SK-N-SH (cell line): ENCODE measurements at regions of chr11 and their contacts with region 1.

Region 1: GRCh38 chr11:67082035-67082791 is 25.6 kb downstream of the RHOD start:
- DNase-seq: peak; percentile 55
- H3K4me3 ChIP-seq: no peak overlapping the region
- H3K27ac ChIP-seq: no peak overlapping the region
- H3K4me1 ChIP-seq: no peaks in the 10 kb centered on the region
- H3K27me3 ChIP-seq: no peaks in the 10 kb centered on the region
- CTCF ChIP-seq: no peak
- EP300 ChIP-seq: no peak
- RAD21 ChIP-seq: 0 out of 2 replicates have a peak, but pooled peaks have one; percentile 15

Region 2: DNA sequence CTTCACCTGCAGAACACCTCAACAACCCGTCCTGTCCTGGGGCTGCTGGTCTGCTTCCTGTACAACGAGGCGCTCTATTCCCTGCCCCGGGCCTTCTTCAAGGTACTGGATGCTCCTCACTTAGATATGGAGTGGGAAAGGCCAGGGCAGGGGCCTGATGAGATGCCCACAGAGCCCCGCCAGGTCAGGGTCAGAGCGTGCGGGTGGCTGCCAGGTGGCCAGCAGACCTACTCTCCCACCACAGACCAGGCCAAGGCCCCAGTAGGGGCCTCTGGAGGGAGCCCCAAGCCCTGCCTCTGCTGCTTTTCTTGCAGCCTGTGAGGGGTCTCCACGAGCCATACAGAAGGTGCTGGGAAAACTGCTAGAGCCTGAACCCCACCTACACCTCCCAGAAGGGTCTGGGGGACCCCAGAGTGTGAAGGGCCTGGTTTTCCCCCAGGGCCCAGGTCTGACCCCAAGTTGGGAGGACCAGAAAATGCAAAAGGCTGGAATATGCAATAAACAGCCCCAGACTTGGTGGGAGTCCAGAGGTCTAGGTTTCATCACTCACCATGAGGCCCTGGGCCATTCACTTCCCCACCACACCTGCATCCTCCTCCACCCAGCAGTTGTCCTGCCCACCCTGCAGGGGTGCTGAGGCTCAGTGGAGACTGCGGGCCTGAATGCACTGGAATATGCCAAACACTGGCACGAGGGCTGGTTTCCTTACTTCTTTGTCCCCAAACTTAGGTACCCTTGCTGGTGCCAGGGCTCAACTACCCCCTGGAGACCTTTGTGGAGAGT is 551.1 kb before region 1 on chr11:
- CTCF ChIA-PET with region 1: no interaction called
- POLR2A ChIA-PET with region 1: no interaction called
- DNase-seq: no peak
- H3K4me3 ChIP-seq: no peak overlapping the region
- H3K27ac ChIP-seq: no peak overlapping the region
- H3K4me1 ChIP-seq: no peaks in the 10 kb centered on the region
- H3K27me3 ChIP-seq: no peaks in the 10 kb centered on the region
- CTCF ChIP-seq: no peak
- EP300 ChIP-seq: no peak
- RAD21 ChIP-seq: no peak

Region 3: DNA sequence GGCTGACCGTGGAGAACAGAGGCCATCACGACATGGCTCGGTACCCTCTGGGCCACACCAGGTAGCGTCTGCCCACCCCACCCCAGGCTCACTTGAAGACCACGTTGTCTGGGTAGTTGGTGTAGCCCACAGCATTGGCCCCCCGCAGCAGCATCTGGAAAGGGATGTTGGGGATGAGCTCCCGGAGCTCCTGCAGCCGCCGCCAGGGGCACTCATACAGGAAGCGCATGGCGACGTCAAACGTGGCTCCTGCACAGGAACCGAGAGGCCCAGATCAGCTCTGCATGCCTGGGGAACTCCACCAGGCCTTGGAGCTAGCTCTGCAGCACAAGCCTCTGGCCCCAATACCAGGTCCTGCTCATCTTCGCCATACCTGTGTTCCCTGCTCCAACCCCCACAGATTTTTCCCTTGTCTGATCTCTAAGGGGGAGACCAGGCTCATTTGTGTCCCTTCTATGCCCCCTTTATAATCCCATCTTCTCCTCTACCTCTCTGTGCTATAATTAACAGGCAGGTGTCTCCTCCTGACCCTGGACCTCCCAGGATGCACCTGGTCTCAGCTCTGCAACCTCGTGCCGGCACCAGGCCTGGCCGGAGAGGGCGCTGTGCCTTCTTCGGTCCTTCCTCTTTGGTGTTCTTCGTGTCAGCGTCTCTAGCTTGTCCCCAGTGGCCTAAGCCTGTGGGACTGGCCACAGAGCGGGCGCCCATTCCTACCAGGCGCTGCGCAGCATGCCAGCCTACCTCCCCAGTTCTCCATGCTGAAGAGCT is 230.3 kb before region 1 on chr11:
- CTCF ChIA-PET with region 1: no interaction called
- POLR2A ChIA-PET with region 1: no interaction called
- DNase-seq: peak; percentile 31
- H3K4me3 ChIP-seq: no peak overlapping the region
- H3K27ac ChIP-seq: no peak overlapping the region
- H3K4me1 ChIP-seq: peaks cover 0 to 5% of the 10 kb centered on the region in 2 experiments; a peak in 1 of 4 replicates
- H3K27me3 ChIP-seq: no peaks in the 10 kb centered on the region
- CTCF ChIP-seq: no peak; the same call in 1 of the 2 replicates
- EP300 ChIP-seq: no peak
- RAD21 ChIP-seq: no peak

Region 4: DNA sequence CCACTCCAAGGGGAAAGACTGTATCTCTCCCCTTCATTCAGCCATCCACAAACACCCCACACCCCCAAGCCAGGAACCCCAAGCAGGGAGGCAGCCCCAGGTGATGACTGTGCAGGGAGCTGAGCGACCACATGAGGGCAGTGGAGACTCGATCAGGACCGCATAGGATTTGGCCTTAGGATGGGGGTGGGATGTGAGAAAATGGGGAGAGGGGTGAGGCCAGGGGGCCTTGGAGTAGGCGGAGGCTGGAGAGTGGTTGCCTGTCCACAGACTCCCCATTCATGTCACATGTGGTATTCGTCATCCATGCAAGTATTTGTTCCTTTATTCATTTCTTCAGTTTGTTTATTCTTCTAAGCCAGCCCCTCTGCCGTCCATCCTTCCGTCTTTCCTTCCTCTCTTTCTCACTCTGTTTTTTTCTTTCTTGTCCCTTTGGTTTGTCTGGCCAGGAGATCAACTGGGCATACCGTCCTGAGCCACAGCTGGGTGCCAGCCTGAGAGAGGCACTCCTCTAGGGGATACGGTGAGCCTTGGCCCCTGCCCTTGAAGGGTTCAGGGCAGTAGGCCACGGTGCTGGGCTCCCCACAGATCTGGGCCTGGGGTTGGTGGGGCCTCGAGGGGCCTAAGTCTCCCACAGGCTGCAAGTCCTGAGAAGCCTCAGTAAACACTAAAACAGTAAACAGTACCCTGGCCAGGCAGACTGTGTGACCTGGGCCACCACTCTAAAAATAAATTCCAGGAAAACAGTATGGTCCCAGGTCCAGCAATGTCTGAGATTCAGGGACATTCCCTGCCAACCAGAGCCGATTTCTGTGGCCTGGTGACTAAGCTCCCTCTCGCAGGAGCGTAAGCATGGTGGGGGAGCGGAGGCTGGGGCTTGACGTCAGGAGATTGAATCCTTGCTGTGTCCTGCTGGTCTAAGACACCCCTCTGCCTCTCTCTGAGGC is 28.0 kb before region 1 on chr11:
- CTCF ChIA-PET with region 1: interaction called, 25 read pairs
- POLR2A ChIA-PET with region 1: no interaction called
- DNase-seq: peak; percentile 92
- H3K4me3 ChIP-seq: no peak overlapping the region; a peak in 1 of 4 replicates
- H3K27ac ChIP-seq: peak overlapping the region in 1 of 2 experiments; percentile 59; a peak in 2 of 4 replicates
- H3K4me1 ChIP-seq: peaks cover 9 to 12% of the 10 kb centered on the region in 2 experiments; a peak in 2 of 4 replicates
- H3K27me3 ChIP-seq: no peaks in the 10 kb centered on the region
- CTCF ChIP-seq: peak; percentile 79
- EP300 ChIP-seq: no peak
- RAD21 ChIP-seq: peak; percentile 75

Region 5: DNA sequence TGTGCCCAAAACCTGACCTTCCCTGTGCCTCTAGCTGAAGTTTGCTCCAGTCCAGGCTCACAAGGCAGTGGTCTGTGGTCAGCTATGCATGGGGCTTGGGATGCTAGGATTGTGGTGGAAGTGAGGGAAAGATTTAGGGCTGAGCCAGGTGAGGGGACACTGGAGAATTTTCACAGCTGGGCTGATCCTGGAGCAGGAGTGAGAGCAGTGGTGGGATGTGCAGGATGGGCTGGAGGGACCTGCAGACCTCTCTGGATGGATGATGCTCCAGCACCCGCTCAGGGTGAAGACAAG is 12.9 kb after region 1 on chr11:
- CTCF ChIA-PET with region 1: interaction called, 23 read pairs
- POLR2A ChIA-PET with region 1: no interaction called
- DNase-seq: no peak
- H3K4me3 ChIP-seq: no peak overlapping the region
- H3K27ac ChIP-seq: no peak overlapping the region
- H3K4me1 ChIP-seq: no peaks in the 10 kb centered on the region
- H3K27me3 ChIP-seq: no peaks in the 10 kb centered on the region
- CTCF ChIP-seq: peak; percentile 1; the same call in 1 of the 2 replicates
- EP300 ChIP-seq: no peak
- RAD21 ChIP-seq: no peak

Region 6: DNA sequence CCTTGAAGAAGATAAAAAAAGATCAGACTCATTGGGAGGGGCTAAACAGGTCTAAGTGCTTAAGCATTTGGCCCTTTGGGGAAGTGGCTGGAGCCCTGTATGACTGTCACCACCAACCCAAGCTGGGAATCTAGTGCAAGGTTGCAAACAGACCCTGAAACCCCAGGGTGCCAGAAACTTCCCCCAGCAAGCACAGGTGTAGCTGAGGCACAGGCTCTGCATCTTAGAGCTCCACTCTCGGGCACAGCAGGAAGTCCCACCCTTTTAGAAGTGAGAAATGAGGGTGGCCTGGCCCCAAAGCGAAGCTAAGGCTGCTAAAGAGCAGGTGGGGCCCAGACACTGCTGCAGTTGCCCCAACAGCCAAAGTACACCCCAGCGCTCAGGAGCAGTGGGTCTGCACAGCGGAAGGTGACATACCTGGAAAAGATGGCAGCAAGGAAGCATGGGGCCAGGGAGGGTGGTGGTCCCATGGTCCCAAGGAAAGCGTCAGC is 31.1 kb after region 1 on chr11:
- CTCF ChIA-PET with region 1: interaction called, 13 read pairs
- POLR2A ChIA-PET with region 1: no interaction called
- DNase-seq: no peak
- H3K4me3 ChIP-seq: no peak overlapping the region
- H3K27ac ChIP-seq: no peak overlapping the region
- H3K4me1 ChIP-seq: peaks cover 0 to 4% of the 10 kb centered on the region in 2 experiments; a peak in 1 of 4 replicates
- H3K27me3 ChIP-seq: no peaks in the 10 kb centered on the region
- CTCF ChIP-seq: no peak
- EP300 ChIP-seq: no peak
- RAD21 ChIP-seq: no peak

Region 7: DNA sequence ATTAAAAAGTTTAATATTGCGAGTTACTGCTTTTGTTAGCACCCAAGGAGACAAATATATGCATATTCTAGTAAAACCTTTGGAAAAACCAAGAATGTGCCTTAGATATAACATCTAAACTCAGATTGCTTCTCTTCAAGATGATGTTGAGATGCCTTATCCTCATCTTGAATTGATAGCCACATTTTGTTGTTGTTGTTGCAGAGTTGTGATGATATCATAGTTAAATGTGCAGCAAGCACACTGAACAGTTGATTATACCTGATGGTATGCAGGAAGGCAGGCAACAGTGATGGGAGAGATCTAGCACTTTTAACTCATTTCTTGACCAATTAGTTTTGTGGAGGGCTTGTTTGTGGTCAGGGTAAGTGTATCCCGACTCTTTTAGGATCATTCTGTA is 84.9 kb after region 1 on chr11:
- CTCF ChIA-PET with region 1: interaction called, 49 read pairs
- POLR2A ChIA-PET with region 1: no interaction called
- DNase-seq: no peak
- H3K4me3 ChIP-seq: no peak overlapping the region
- H3K27ac ChIP-seq: peak overlapping the region; percentile 29 to 79
- H3K4me1 ChIP-seq: peaks cover 0 to 15% of the 10 kb centered on the region in 2 experiments; a peak in 2 of 4 replicates
- H3K27me3 ChIP-seq: no peaks in the 10 kb centered on the region
- CTCF ChIP-seq: no peak
- EP300 ChIP-seq: no peak
- RAD21 ChIP-seq: no peak

Region 8: DNA sequence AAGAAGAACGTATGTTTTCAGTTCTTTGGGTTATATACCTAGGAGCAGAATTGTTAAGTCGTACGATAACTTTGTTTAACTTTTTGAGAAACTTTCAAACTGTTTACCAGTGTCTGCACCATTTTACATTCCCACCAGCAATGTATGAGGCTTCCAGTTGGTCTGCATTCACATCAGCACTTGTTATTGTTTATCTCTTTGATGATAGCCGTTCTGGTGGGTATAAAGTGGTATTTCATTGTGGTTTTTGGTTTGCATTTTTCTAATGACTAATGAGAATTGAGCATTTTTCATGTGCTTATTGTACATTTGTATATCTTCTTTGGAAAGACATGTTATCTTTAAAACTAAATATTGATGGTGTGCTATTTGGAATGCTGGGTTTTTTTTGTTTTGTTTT is 96.7 kb after region 1 on chr11:
- CTCF ChIA-PET with region 1: interaction called, 49 read pairs
- POLR2A ChIA-PET with region 1: no interaction called
- DNase-seq: no peak
- H3K4me3 ChIP-seq: no peak overlapping the region
- H3K27ac ChIP-seq: no peak overlapping the region
- H3K4me1 ChIP-seq: peaks cover 0 to 27% of the 10 kb centered on the region in 2 experiments; a peak in 1 of 4 replicates
- H3K27me3 ChIP-seq: no peaks in the 10 kb centered on the region
- CTCF ChIP-seq: no peak
- EP300 ChIP-seq: no peak
- RAD21 ChIP-seq: no peak